ENCODE measurements at regions of chr17 and their contacts with region 1.

Region 1: DNA sequence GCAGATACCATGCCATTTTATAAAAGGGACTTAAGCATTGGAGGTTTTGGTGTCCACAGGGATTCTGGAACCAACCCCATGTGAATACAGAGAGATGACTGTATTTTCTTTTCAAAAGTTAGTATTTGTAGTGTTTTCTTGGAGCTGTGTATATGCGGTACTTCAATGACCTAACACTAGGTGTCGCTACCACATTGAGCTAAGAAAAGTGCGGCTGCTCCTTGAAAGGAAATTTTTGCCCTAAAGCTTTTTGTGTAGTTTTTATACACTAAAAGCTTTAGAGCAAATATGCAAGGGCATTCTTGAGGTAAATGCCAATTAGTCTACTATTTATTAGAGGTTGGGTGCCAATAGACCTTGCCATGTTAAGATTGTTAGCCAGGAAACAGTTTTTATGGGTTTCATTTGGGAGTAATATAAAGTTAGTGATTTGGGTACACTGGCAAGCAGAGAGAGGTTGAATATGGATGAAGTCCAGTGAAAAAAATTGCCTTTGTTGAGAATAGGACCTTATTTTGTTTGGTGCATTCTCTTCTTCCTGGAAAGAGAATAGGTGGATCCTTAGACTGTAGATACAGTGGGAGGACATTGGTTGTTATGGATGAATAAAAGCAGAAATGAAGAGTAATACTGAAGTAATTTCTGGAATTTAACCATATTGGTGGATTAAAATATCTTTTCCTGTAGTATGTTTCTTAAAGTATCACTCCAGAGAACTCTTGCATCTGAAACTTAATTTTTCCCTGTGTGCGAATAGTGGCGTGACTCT is 43.3 kb downstream of the BCAS3 start:
- DNase-seq: peak; percentile 74
- H3K4me3 ChIP-seq: no peak overlapping the region
- H3K27ac ChIP-seq: no peak overlapping the region
- H3K4me1 ChIP-seq: no peaks in the 10 kb centered on the region
- H3K27me3 ChIP-seq: no peaks in the 10 kb centered on the region
- CTCF ChIP-seq: peak; percentile 90

Region 2: DNA sequence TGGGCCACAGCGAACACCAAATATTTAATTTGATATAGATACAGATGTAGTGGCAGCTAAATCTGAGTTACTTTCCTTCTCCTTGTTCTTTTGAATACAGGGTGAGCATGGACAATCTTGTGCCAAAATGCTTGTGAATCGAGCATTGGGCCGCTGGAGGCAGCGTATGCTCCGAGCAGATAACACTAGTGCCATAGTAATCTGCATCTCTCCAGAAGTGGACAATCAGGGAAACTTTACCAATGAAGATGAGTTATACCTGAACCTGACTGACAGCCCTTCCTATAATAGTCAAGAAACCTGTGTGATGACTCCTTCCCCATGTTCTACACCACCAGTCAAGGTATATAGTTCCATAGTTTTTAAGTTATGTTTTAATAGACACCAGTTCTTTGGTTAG is 64.4 kb before region 1 on chr17:
- CTCF ChIA-PET with region 1: no interaction called
- POLR2A ChIA-PET with region 1: no interaction called
- intact Hi-C with region 1: no loop called
- DNase-seq: no peak
- H3K4me3 ChIP-seq: no peak overlapping the region
- H3K27ac ChIP-seq: no peak overlapping the region
- H3K4me1 ChIP-seq: no peaks in the 10 kb centered on the region
- H3K27me3 ChIP-seq: no peaks in the 10 kb centered on the region
- CTCF ChIP-seq: no peak

Region 3: GRCh38 chr17:60971515-60972369 is 250.8 kb after region 1 on chr17:
- CTCF ChIA-PET with region 1: no interaction called
- POLR2A ChIA-PET with region 1: no interaction called
- intact Hi-C with region 1: loop called (anchors 10 kb)
- DNase-seq: peak; percentile 53
- H3K4me3 ChIP-seq: no peak overlapping the region
- H3K27ac ChIP-seq: no peak overlapping the region
- H3K4me1 ChIP-seq: no peaks in the 10 kb centered on the region
- H3K27me3 ChIP-seq: no peaks in the 10 kb centered on the region
- CTCF ChIP-seq: peak; percentile 76

Region 4: DNA sequence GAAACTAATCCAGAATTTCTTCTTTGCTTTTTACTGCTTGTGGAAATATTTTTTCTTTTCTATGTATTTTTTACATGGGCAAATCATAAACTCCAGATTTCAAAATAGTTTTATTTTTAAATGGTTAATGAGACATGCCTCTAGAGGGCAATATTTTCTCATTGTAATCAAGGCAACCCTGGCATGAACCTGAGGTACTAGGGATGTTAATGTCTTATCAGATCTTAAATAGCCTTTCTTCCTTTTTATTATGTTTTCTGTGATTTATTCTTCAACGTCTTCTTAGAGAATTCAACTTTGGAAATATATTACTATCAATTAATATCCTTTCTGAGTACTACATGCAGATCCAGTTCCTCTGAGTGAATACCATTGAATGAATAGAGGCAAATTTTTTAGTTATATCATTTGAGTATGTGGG is 281.4 kb after region 1 on chr17:
- CTCF ChIA-PET with region 1: no interaction called
- POLR2A ChIA-PET with region 1: no interaction called
- intact Hi-C with region 1: loop called (anchors 10 kb)
- DNase-seq: peak; percentile 45
- H3K4me3 ChIP-seq: no peak overlapping the region
- H3K27ac ChIP-seq: no peak overlapping the region
- H3K4me1 ChIP-seq: no peaks in the 10 kb centered on the region
- H3K27me3 ChIP-seq: no peaks in the 10 kb centered on the region
- CTCF ChIP-seq: peak; percentile 69

Region 5: DNA sequence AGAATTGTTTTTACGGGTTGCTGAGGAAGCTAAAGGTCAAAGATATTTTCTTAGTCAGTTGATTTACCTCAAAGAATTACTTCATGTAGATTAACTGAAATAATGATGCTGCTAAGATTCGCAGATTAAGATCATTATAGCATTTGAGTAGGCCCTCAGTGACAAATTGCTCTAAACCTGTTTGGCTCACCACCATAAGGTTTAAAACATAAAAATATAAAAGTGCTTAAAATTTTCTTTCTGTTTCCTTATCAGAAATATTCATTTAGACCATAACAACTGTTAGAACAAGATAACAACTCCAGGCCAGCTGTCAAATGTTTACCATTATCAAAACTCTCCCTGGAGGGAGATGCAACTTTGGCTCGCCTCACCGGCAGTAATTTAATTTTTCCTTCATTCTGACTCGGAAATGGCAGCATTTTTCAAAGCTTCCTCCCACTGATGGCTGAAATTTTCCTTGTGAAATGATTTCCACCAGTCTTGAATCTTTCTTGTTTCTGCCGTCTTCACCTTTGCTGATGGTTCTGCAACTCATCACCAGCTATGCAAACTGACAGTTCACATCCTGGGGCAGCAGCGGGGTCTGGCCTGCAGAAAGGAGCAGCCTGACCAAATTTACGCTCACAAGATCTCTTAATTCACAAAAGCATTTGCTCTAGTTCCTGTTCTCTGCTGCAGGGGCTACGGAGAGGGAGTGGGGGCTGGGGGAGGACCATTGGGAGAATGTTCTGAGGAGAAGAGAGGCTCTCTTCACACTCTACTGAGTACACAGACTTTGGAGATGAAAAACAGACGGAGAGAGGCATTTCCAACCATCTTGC is 424.0 kb after region 1 on chr17:
- CTCF ChIA-PET with region 1: no interaction called
- POLR2A ChIA-PET with region 1: no interaction called
- intact Hi-C with region 1: loop called (anchors 10 kb)
- DNase-seq: peak; percentile 5
- H3K4me3 ChIP-seq: no peak overlapping the region
- H3K27ac ChIP-seq: no peak overlapping the region
- H3K4me1 ChIP-seq: peaks cover 15% of the 10 kb centered on the region
- H3K27me3 ChIP-seq: no peaks in the 10 kb centered on the region
- CTCF ChIP-seq: no peak

Region 6: GRCh38 chr17:61389670-61390478 is 668.9 kb after region 1 on chr17:
- CTCF ChIA-PET with region 1: no interaction called
- POLR2A ChIA-PET with region 1: no interaction called
- intact Hi-C with region 1: loop called (anchors 5 kb)
- DNase-seq: peak; percentile 60
- H3K4me3 ChIP-seq: no peak overlapping the region
- H3K27ac ChIP-seq: no peak overlapping the region
- H3K4me1 ChIP-seq: no peaks in the 10 kb centered on the region
- H3K27me3 ChIP-seq: peaks cover 4% of the 10 kb centered on the region
- CTCF ChIP-seq: peak; percentile 98

Region 7: GRCh38 chr17:61405686-61406536 is 685.0 kb after region 1 on chr17:
- CTCF ChIA-PET with region 1: interaction called, 12 read pairs
- POLR2A ChIA-PET with region 1: no interaction called
- intact Hi-C with region 1: no loop called
- DNase-seq: no peak
- H3K4me3 ChIP-seq: no peak overlapping the region
- H3K27ac ChIP-seq: no peak overlapping the region
- H3K4me1 ChIP-seq: peaks cover 19% of the 10 kb centered on the region
- H3K27me3 ChIP-seq: peaks cover 82% of the 10 kb centered on the region
- CTCF ChIP-seq: no peak

Region 8: GRCh38 chr17:61574542-61575174 is 853.7 kb after region 1 on chr17:
- CTCF ChIA-PET with region 1: no interaction called
- POLR2A ChIA-PET with region 1: no interaction called
- intact Hi-C with region 1: loop called (anchors 10 kb)
- DNase-seq: peak; percentile 30
- H3K4me3 ChIP-seq: no peak overlapping the region
- H3K27ac ChIP-seq: no peak overlapping the region
- H3K4me1 ChIP-seq: no peaks in the 10 kb centered on the region
- H3K27me3 ChIP-seq: no peaks in the 10 kb centered on the region
- CTCF ChIP-seq: peak; percentile 42

Measured in A673 (cell line).